Dorsolateral prefrontal cortex (tissue), 120 donors: ENCODE measurements at regions of chr1 and their contacts with region 1.

Region 1: DNA sequence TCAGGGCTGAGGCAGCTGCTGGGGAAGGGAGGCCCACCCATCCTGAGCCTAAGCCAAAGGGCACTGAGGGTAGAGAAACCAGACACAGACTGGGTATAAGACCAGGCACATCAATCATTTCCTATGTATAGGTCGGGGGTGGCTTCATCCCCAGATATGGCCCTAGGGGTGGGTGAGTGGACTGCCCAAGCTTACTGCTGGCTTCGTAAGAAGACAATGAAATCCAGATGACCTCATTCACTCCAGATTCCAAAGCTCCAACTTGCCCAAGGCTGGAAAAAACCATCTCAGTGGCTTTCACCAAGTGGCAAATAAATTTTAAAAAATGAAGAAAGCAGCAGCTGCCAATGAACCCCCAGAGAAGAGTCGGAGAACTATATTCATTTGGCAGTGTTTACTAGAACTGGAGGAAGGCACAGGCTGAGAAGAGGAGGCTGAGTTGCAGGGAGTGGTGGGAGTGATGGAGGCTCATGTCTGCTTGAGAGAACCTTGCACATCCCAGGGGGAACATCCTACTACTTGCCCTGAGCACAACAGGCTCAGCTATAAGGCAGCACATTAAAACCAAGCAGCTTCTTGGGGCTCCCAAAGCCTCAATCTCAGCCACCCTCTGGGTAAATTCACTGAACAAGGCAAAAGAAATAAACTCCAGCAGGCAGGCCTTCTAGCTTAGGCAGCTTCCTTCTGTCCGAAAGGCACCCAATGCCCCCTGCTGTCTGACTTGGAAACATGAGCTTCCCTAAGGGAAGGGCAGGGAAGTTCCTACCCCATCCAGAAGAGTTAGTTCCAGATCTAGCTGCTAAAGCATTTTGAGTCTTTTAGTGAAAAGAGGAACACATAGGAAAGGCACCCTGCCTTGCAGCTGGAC is 14.1 kb downstream of the PEA15 start:
- DNase-seq: peak in 9 of 10 donors; percentile 47 to 80 (median 68)
- H3K4me3 ChIP-seq: no peak overlapping the region
- H3K27ac ChIP-seq: peak overlapping the region; percentile 42 to 98 (median 87)
- H3K27me3 ChIP-seq: no peaks in the 10 kb centered on the region
- CTCF ChIP-seq: peak; percentile 56 to 88 (median 78)

Region 2: GRCh38 chr1:160161965-160162705 is 57.2 kb before region 1 on chr1:
- intact Hi-C with region 1: loop called in 1 of 2 experiments (anchors 5 kb)
- DNase-seq: peak in 3 of 10 donors; percentile 47 to 61 (median 51)
- H3K4me3 ChIP-seq: no peak overlapping the region
- H3K27ac ChIP-seq: peak overlapping the region in 8 of 59 donors; percentile 7 to 46 (median 28)
- H3K27me3 ChIP-seq: no peaks in the 10 kb centered on the region
- CTCF ChIP-seq: peak in 54 of 56 donors; percentile 13 to 78 (median 52)

Region 3: DNA sequence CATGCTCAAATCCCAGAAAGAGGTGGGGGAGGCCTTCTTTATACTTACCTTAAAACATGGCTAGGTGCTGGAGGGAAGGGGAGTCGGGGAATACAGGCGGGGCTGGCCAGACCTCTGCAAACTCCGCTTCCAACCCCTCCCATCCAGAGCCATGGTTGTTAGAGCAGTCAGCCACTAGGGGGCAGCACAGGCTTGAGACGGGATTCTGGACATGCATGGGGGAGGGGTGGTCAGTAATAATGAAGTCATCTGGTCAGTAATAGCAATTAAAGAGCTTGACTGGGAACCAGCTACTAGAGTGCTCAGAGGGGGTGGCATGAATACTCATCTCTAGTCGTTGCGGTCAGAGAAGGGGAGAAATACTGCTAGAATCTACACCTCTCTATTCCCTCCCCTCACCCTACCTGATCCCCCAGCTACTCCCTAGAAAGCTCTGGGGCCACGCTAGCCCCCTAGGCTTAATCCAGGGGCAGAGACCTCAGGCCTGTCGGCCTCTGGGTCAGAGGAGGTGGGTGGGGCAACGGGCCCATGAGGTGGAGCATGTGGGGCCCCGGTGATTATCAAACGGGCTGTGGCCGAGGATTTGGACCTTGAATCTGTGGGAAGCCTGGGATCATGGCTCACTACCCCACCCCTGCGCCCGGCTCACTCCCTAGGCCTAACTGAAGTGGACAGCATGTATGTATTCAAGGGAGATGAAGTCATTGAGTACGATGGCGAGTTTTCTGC is 26.0 kb before region 1 on chr1:
- intact Hi-C with region 1: loop called (anchors 1 to 2 kb)
- DNase-seq: peak; percentile 71 to 93 (median 84)
- H3K4me3 ChIP-seq: peak overlapping the region in 57 of 59 donors; percentile 5 to 59 (median 42)
- H3K27ac ChIP-seq: peak overlapping the region in 45 of 59 donors; percentile 10 to 86 (median 65)
- H3K27me3 ChIP-seq: no peaks in the 10 kb centered on the region
- CTCF ChIP-seq: peak; percentile 93 to 99 (median 97)

Region 4: GRCh38 chr1:160328184-160328583 is 108.9 kb after region 1 on chr1:
- intact Hi-C with region 1: no loop called
- DNase-seq: peak in 1 of 10 donors; percentile 14
- H3K4me3 ChIP-seq: peak overlapping the region in 33 of 59 donors; percentile 0 to 54 (median 22)
- H3K27ac ChIP-seq: peak overlapping the region; percentile 50 to 100 (median 95)
- H3K27me3 ChIP-seq: no peaks in the 10 kb centered on the region
- CTCF ChIP-seq: peak in 2 of 56 donors; percentile 17 to 21